PC-9 (cell line): ENCODE measurements at regions of chr2 and their contacts with region 1.

Region 1: DNA sequence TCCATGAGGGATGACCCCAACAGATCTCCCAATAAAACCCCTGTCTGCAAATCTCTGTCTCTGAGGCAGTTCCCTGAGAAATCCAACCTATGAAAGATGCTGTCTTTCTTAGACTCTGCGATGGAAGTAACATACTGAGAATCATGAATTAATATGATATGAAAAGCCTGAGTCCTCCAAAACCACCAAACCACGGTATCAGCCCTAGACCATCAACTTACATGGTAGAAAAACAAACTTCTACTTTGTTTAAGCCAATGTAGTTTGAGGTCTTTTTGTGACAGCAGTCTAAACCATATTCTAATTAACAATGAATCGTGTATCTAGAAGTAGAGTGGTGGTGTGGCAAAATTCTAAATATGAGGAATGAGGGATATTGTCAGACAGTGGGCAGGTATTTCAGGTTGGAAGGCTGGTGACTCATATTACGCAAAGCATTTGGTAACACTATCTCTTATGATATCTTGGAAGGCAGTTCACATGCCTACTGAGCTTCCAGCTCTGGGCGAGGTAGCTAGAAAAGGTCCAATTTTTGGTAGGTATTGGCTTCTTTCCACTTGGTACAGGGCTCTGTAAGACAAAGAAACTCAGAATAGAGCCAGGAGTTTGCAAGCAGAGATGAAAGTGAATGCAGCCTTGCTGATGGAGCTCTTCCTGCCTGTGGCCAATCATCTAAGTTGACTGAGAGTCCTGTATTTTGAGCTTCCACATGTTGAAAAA is 215.8 kb downstream of the ZFP36L2 start:
- DNase-seq: peak; percentile 64 to 96
- H3K4me3 ChIP-seq: peak overlapping the region; percentile 7; the same call in 1 of the 2 replicates
- H3K27ac ChIP-seq: peak overlapping the region; percentile 66
- H3K4me1 ChIP-seq: peaks cover 29% of the 10 kb centered on the region
- H3K27me3 ChIP-seq: no peaks in the 10 kb centered on the region
- CTCF ChIP-seq: no peak

Region 2: GRCh38 chr2:42954227-42954962 is 56.2 kb before region 1 on chr2:
- CTCF ChIA-PET with region 1: interaction called, 3 read pairs
- POLR2A ChIA-PET with region 1: no interaction called
- intact Hi-C with region 1: loop called (anchors 5 kb)
- DNase-seq: no peak
- H3K4me3 ChIP-seq: no peak overlapping the region
- H3K27ac ChIP-seq: no peak overlapping the region
- H3K4me1 ChIP-seq: peaks cover 59% of the 10 kb centered on the region
- H3K27me3 ChIP-seq: no peaks in the 10 kb centered on the region
- CTCF ChIP-seq: no peak